ENCODE measurements at regions of chr9 and their contacts with region 1.

Region 1: DNA sequence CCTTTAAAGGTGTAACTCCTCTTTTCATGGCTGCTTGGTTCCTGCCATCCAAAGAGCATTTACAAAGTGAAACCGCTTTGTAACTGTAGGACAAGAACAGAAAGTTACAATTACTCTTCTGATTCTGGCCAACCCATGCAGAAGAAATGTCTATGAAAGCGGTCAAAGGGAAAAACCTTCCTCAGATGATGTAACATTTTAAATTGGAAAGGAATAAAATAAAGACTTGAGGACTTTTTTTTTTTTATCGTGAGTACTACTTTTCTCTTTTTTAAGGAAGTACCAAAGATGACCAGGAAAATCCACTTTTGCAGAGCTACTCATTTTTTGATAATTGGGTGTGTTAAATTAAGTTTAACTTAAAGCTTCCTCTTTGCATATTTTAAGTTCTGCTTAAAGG is 13.0 kb upstream of the C9orf72 start:
- DNase-seq: no peak
- ATAC-seq: no peak
- H3K4me3 ChIP-seq: no peak overlapping the region
- H3K27ac ChIP-seq: no peak overlapping the region
- H3K4me1 ChIP-seq: no peaks in the 10 kb centered on the region
- H3K27me3 ChIP-seq: no peaks in the 10 kb centered on the region
- CTCF ChIP-seq: no peak
- POLR2A ChIP-seq: no peak

Region 2: GRCh38 chr9:27645161-27645840 is 59.0 kb after region 1 on chr9:
- intact Hi-C with region 1: loop called (anchors 10 kb)
- DNase-seq: no peak
- ATAC-seq: no peak
- H3K4me3 ChIP-seq: no peak overlapping the region
- H3K27ac ChIP-seq: no peak overlapping the region
- H3K4me1 ChIP-seq: no peaks in the 10 kb centered on the region
- H3K27me3 ChIP-seq: no peaks in the 10 kb centered on the region
- CTCF ChIP-seq: no peak
- POLR2A ChIP-seq: no peak